ENCODE measurements at regions of chr3 and their contacts with region 1.

Region 1: GRCh38 chr3:154252759-154253638 is 71.3 kb downstream of the DHX36 start:
- DNase-seq: peak; percentile 81 to 97 (median 90)
- ATAC-seq: peak; percentile 98
- H3K4me3 ChIP-seq: no peak overlapping the region
- H3K4me1 ChIP-seq: no peaks in the 10 kb centered on the region
- CTCF ChIP-seq: peak; percentile 64

Region 2: DNA sequence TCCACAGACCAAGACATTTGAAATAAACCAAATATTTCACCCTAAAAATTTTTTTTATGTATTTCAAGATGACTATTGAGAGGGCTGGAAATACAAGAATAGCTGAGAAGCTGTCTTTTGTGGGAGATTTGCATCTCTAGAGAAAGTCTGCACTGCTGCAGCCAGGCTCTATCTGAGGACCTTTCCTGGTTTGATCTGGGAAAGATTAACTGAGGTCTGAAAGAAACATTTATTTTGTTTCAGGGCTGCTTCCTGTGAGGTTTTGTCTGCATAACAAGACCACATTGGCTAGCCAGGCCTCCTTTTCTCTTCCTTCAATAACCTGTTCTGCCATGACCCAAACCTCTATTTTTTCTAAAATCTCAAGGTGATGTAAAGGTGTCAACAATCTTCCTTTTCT is 249.3 kb before region 1 on chr3:
- intact Hi-C with region 1: loop called in 1 of 2 experiments (anchors 10 kb)
- DNase-seq: no peak
- ATAC-seq: no peak
- H3K4me3 ChIP-seq: no peak overlapping the region
- H3K4me1 ChIP-seq: no peaks in the 10 kb centered on the region
- CTCF ChIP-seq: no peak

Region 3: DNA sequence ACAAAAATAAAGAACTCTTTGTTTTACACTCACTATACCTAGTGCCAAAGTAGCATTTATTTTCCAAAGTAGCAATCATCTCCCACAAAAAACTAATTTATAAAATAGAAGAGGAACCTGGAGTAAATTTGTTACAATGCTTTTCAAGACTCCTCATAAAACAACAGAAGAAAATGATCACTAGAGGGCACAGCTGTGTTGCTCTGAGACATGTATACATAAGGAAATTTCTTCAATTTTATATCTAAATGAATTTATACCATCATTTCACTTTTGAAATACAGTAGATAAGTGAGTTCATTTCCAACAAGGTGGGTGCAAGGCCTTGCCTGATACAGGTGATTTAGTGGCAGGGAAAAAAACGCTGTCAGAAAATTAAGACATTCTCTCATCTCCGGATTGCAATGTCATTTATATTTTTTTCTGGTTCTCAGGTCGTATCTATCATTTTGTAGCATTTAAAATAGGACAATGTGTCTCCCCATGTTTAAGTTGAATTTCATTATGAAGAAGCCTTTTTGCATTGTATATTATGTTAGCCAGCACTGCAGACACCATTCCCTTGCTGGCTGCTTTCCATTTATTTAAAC is 157.1 kb before region 1 on chr3:
- intact Hi-C with region 1: loop called (anchors 5 to 10 kb)
- DNase-seq: peak in 1 of 3 donors; percentile 34
- ATAC-seq: no peak
- H3K4me3 ChIP-seq: no peak overlapping the region
- H3K4me1 ChIP-seq: no peaks in the 10 kb centered on the region
- CTCF ChIP-seq: no peak